HCT116 (cell line): ENCODE measurements at regions of chr1 and their contacts with region 1.

Region 1: GRCh38 chr1:67685067-67685557 is at the start of gene GADD45A:
- DNase-seq: peak; percentile 98
- ATAC-seq: peak; percentile 88
- H3K4me3 ChIP-seq: peak within 1 kb of the TSS; percentile 91
- H3K27ac ChIP-seq: peak within 1 kb of the TSS; percentile 98
- H3K4me1 ChIP-seq: peaks cover 28 to 50% of the 10 kb centered on the region in 2 experiments
- H3K27me3 ChIP-seq: no peaks in the 10 kb centered on the region
- CTCF ChIP-seq: no peak
- POLR2A ChIP-seq: peak; percentile 99
- RAD21 ChIP-seq: 0 out of 2 replicates have a peak, but pooled peaks have one; percentile 24
- total RNA-seq, gene GADD45A: 105 TPM

Region 2: DNA sequence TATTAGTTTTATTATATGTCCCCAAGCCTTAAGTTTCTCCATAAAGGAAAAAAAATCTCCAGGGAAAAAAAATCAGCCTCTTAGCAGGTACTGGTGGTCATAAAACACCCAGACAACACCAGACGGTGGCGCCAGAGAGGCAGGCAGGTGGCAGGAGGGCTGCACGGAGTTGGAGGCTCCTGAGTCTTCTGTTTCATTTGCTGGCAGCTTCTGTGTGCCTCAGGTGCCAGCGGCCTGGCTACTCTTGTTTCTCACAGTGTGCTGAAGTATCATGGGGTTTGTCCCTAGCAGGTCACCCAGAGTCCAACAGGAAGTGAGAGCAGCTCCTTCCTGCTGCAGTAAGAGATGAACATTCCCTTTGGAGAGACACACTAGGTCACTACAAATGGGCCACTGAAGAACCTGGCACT is 123.4 kb before region 1 on chr1:
- CTCF ChIA-PET with region 1: interaction called, 3 read pairs
- POLR2A ChIA-PET with region 1: interaction called, 11 read pairs
- RAD21 ChIA-PET with region 1: no interaction called
- intact Hi-C with region 1: loop called (anchors 10 kb)
- DNase-seq: peak; percentile 77
- ATAC-seq: peak; percentile 93
- H3K4me3 ChIP-seq: no peak overlapping the region
- H3K27ac ChIP-seq: no peak overlapping the region
- H3K4me1 ChIP-seq: peaks cover 8 to 25% of the 10 kb centered on the region in 2 experiments; a peak in 3 of 4 replicates
- H3K27me3 ChIP-seq: no peaks in the 10 kb centered on the region
- CTCF ChIP-seq: peak; percentile 84 to 93 (median 91)
- POLR2A ChIP-seq: no peak
- RAD21 ChIP-seq: peak; percentile 93

Region 3: DNA sequence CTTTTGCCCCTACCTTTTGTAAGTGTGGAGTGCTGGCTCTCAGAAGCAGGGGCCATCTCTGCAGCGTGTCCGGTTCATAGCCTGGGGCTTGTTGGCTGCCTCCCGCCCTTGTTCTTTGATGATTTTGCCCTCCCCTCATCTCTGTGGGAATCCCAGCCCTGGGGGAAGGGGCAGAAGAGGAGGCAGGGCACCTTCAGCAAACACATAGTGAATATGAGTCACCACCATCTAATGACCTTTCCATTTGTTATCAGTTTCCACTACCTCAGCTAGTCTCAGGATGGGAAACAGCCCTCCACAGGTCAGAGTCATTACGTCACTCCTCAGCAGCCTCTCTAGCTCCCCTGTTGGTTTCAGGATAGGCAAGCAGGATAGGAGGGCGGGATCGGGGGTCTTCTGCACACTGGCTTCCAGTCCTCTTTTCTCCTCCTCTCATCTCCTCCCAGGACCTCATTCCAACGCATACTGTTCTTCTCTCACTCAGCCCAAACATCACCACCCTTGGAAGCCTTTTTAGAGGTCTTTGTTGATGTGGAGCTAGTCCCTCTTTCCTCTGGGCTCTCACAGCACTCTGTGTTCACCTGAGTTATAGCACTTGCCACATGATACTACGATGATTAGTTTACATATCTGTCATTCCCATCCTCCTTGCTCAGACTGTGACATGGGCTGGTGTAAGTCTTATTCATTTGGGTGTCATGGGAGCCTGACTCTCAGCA is 15.7 kb after region 1 on chr1:
- CTCF ChIA-PET with region 1: interaction called, 7 read pairs
- POLR2A ChIA-PET with region 1: interaction called, 50 read pairs
- RAD21 ChIA-PET with region 1: interaction called in 1 of 2 experiments, 8 read pairs
- intact Hi-C with region 1: no loop called
- DNase-seq: peak; percentile 93
- ATAC-seq: peak; percentile 86
- H3K4me3 ChIP-seq: peak overlapping the region in 1 of 2 experiments; percentile 15; a peak in 2 of 4 replicates
- H3K27ac ChIP-seq: peak overlapping the region; percentile 82
- H3K4me1 ChIP-seq: peaks cover 33 to 37% of the 10 kb centered on the region in 2 experiments
- H3K27me3 ChIP-seq: no peaks in the 10 kb centered on the region
- CTCF ChIP-seq: peak in 2 of 3 experiments; percentile 49 to 54; a peak in 4 of 6 replicates
- POLR2A ChIP-seq: no peak
- RAD21 ChIP-seq: peak; percentile 21; the same call in 1 of the 2 replicates

Region 4: DNA sequence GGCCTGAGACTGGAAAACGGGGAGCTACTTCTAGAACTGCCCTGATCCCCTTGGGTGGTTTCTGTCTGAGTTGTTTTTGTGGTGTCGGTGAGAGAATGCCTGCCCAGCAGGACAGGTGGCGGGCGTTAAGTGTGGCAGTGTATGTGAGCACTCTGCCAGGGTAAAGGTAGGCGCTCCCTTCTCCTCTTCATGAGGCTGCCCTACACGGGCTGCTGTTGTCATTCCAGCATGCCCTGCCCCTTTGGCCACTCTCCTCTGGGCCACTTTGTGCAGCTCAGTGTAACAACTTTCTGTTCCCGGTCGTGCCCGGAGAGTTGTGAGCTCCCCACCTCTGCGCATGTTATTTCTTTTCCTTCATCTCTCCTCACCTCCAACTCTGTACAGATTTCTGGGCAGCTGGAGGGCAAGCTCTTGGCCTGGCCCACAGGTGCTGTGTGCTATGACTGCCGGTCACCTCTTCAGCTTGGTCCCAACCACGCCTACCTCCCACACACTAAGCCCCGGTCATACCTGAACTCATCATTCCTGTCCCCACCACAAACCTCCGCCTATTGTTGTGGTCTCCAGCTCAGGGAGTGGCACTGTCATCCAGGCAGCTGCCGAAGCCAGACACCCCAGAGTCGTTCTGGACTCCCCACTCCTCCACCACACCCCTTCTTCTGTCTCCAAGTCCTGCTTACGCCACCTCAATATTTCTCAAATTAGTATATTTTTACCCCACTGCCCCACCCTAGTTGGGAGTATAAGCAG is 68.8 kb after region 1 on chr1:
- CTCF ChIA-PET with region 1: no interaction called
- POLR2A ChIA-PET with region 1: interaction called, 14 read pairs
- RAD21 ChIA-PET with region 1: interaction called in 1 of 2 experiments, 3 read pairs
- intact Hi-C with region 1: loop called (anchors 2 kb)
- DNase-seq: peak; percentile 71
- ATAC-seq: peak; percentile 77
- H3K4me3 ChIP-seq: peak overlapping the region in 1 of 2 experiments; percentile 28; a peak in 2 of 4 replicates
- H3K27ac ChIP-seq: no peak overlapping the region
- H3K4me1 ChIP-seq: peaks cover 44 to 62% of the 10 kb centered on the region in 2 experiments
- H3K27me3 ChIP-seq: no peaks in the 10 kb centered on the region
- CTCF ChIP-seq: no peak
- POLR2A ChIP-seq: no peak
- RAD21 ChIP-seq: no peak

Region 5: GRCh38 chr1:67832737-67833601 is 147.9 kb after region 1 on chr1 and contains the start of gene GNG12:
- CTCF ChIA-PET with region 1: no interaction called
- POLR2A ChIA-PET with region 1: interaction called, 3 read pairs
- RAD21 ChIA-PET with region 1: no interaction called
- intact Hi-C with region 1: loop called (anchors 10 kb)
- DNase-seq: peak; percentile 51
- ATAC-seq: peak; percentile 86
- H3K4me3 ChIP-seq: peak within 1 kb of the TSS; percentile 82 to 84
- H3K27ac ChIP-seq: peak within 1 kb of the TSS; percentile 79
- H3K4me1 ChIP-seq: peaks cover 12 to 28% of the 10 kb centered on the region in 2 experiments
- H3K27me3 ChIP-seq: no peaks in the 10 kb centered on the region
- CTCF ChIP-seq: no peak
- POLR2A ChIP-seq: peak; percentile 25
- RAD21 ChIP-seq: no peak
- total RNA-seq, gene GNG12: 49.6 TPM

Region 6: GRCh38 chr1:67874501-67875111 is 189.5 kb after region 1 on chr1:
- CTCF ChIA-PET with region 1: no interaction called
- POLR2A ChIA-PET with region 1: no interaction called
- RAD21 ChIA-PET with region 1: no interaction called
- intact Hi-C with region 1: no loop called
- DNase-seq: no peak
- ATAC-seq: no peak
- H3K4me3 ChIP-seq: no peak overlapping the region
- H3K27ac ChIP-seq: no peak overlapping the region
- H3K4me1 ChIP-seq: no peaks in the 10 kb centered on the region
- H3K27me3 ChIP-seq: no peaks in the 10 kb centered on the region
- CTCF ChIP-seq: no peak
- POLR2A ChIP-seq: no peak
- RAD21 ChIP-seq: no peak